Activated CD8-positive, alpha-beta T cell treated with anti-CD3 and anti-CD28 coated beads, Interleukin-2, amount 10 ng/mL, durations not matched to agents 7 days and 5 days (primary cell): ENCODE measurements at regions of chr2 and their contacts with region 1.

Region 1: GRCh38 chr2:6917071-6917760 is at the start of gene RNF144A:
- DNase-seq: peak; percentile 72
- ATAC-seq: peak; percentile 80
- H3K4me3 Mint-ChIP-seq: peak within 1 kb of the TSS; percentile 85
- H3K27ac Mint-ChIP-seq: peak within 1 kb of the TSS; percentile 86
- H3K4me1 Mint-ChIP-seq: peaks cover 77% of the 10 kb centered on the region
- H3K27me3 Mint-ChIP-seq: no peaks in the 10 kb centered on the region
- total RNA-seq, gene RNF144A: 76.9 to 87.0 TPM

Region 2: GRCh38 chr2:6872394-6872793 is 44.8 kb before region 1 on chr2:
- CTCF ChIA-PET with region 1: interaction called, 66 read pairs
- POLR2A ChIA-PET with region 1: interaction called, 188 read pairs
- DNase-seq: no peak
- ATAC-seq: no peak
- H3K4me3 Mint-ChIP-seq: no peak overlapping the region
- H3K27ac Mint-ChIP-seq: no peak overlapping the region
- H3K4me1 Mint-ChIP-seq: peaks cover 72% of the 10 kb centered on the region
- H3K27me3 Mint-ChIP-seq: no peaks in the 10 kb centered on the region

Region 3: DNA sequence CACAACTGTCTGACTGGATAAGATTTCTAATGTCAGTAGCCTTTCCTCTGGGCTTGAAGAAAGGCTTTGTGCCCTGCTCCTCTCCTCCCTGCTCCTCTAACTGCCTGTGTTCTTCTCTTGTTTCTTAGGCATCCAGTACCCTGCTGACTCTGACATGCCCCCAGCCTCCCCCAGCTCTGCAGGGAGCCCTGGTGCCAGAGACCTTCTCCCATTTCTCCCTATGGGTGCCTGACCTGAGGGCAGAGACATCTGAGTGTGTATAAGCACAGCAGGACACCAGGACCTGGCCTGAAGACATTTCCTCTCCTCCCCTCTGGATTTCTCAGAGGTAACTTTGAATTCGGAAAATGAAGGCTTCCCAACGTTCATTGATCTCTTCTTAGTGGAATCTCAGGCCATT is 23.6 kb after region 1 on chr2:
- CTCF ChIA-PET with region 1: no interaction called
- POLR2A ChIA-PET with region 1: no interaction called
- DNase-seq: no peak
- ATAC-seq: no peak
- H3K4me3 Mint-ChIP-seq: no peak overlapping the region
- H3K27ac Mint-ChIP-seq: no peak overlapping the region
- H3K4me1 Mint-ChIP-seq: peaks cover 56% of the 10 kb centered on the region
- H3K27me3 Mint-ChIP-seq: no peaks in the 10 kb centered on the region